ENCODE measurements at regions of chr15 and their contacts with region 1.

Region 1: DNA sequence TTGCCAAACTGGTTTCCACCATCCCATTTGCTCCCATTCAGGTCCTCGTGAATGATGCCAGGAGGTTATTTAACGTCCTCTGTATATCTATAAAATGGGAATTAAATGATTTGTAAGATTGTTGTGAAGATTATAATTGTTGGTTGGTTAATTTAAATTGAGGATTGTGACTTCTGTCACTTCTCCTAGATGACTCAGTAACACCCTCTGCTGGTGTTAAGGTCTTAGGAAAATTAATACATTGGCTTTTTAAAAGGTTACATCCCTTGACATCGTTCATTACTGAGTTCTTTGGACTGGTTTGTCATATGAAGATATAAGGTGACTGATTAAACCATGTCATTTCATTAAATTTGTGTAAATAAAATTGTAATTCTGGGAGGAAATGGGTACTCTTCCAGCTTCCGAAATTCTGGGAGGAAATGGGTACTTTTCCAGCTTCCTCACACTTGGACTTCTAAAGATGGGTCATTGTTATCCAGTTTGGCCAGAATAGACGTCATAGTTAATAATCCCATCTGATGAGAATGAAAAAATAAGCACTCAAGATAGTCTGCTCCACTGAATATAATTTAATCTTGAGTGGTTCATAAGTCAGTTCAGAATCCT is 33.3 kb upstream of the PAQR5 start:
- DNase-seq: no peak

Region 2: DNA sequence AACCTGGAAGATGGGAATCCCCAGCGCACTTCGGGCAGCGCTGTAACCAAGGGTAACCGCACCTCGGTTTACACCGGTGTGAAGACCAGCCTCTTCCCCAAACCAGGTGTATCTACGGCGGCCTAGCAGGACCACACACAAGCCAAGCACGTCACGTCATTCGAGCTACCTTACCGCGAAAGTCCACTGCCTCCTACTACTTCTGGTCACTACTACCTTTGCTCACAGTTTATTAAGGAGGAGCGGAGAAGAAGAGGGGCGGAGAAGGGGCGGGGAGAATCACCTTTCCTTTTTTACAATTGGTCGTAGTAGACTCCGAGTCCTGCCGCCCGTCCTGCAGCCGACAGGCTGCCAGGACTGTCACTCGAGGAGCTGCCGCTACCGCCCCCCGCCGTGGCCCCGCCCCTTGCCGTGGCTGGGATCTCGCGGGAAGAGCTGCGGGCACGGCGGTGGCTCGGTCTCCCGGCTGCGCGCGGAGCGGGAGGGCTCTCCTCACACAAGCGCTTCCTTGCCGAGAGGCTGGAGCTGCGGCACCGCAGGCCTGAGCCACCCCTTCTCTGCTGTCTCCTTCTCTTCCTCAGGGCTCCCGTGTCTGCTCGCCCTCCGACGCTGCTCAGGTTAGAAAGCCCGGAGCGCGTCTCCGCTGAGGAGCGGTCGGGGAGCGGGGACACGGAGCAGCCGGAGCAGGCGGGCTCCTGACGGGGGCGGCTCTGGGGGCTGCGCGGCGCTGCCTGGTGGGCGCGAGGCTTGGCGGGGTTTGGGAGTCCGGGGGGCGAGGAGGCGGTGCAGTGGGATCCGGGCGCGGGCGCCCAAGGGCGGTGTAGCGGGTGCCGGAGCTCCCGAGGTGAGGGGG is 105.1 kb before region 1 on chr15 and contains the start of gene GLCE:
- intact Hi-C with region 1: loop called (anchors 5 kb)
- DNase-seq: peak; percentile 92 to 100 (median 97)

Region 3: DNA sequence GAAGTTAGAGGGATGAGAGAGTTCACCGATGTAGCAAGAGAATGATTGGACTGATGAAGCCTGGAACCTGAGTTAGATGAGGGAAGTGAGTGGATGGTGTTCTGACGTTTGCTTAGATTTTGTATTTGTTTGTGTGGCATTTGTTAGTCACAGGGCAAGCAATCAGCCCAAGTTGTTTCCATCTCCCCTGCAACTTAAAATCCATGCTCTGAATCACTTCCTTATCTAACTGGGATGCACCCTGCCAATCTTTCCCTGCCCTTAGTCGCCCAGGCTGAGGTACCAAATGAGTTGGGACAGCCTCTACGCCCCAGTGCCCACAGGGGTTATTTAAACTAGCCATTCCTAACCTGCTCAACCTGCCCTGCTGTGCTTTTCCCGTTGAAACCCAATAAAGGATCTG is 45.9 kb after region 1 on chr15:
- intact Hi-C with region 1: no loop called
- DNase-seq: peak in 2 of 10 donors; percentile 15 to 40

Region 4: GRCh38 chr15:69394556-69395282 is 129.3 kb after region 1 on chr15:
- intact Hi-C with region 1: loop called (anchors 10 kb)
- DNase-seq: peak; percentile 74 to 98 (median 92)

Region 5: DNA sequence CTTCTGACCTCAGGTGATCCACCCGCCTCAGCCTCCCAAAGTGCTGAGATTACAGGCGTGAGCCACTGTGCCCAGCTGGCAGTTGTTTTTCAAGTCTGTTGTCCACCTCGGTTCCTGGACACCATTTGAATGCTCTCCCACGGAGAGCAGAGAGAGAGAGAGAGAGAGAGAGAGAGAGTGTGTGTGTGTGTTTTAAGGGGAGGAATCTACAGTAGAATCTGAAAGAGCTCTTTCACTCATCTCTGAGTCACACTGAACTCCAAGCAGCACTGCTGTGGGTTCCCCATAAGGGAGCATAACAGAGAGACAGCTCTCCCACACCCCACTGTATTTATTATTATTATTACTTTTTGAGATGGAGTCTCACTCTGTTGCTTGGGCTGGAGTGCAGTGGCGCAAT is 343.7 kb after region 1 on chr15:
- intact Hi-C with region 1: no loop called
- DNase-seq: no peak

Measured in posterior cingulate gyrus (tissue), 11 donors.